Activated CD8-positive, alpha-beta T cell treated with anti-CD3 and anti-CD28 coated beads, Interleukin-2, amount 10 ng/mL, durations not matched to agents 7 days and 5 days (primary cell): ENCODE measurements at regions of chr4 and their contacts with region 1.

Region 1: GRCh38 chr4:153750197-153750817 is 9.5 kb downstream of the RNF175 start:
- DNase-seq: peak; percentile 78
- ATAC-seq: peak; percentile 92
- H3K4me3 Mint-ChIP-seq: no peak overlapping the region
- H3K27ac Mint-ChIP-seq: no peak overlapping the region
- H3K4me1 Mint-ChIP-seq: no peaks in the 10 kb centered on the region
- H3K27me3 Mint-ChIP-seq: peaks cover 17% of the 10 kb centered on the region

Region 2: DNA sequence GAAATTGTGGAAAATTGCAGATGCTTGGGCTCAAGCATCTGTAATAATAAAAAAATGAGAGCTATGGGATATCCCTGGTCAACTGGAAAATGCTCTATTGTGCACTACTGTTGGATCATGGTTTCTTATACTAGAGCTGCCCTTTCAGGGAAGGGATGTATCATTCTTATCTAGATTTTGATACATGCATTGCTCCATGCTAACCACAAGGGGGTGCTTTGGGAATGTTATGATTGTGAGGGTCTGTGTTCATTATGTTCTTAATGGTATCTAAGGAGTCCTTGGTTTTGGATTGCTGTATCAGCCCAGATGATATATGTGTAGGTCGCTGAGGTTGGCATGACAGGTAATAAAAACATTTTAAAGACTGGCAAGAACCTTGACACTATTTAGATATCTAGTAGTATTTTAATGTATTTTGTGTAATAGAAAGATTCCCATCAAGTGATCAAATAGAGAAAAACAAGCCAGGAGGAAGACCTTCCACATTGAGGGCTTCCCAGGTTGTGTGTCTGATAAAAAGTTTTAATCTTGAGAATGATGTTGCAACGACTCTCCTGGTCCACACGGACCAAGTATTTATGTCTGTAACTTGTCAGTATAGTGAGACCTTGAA is 115.5 kb before region 1 on chr4:
- CTCF ChIA-PET with region 1: interaction called, 33 read pairs
- POLR2A ChIA-PET with region 1: no interaction called
- DNase-seq: no peak
- ATAC-seq: no peak
- H3K4me3 Mint-ChIP-seq: no peak overlapping the region
- H3K27ac Mint-ChIP-seq: no peak overlapping the region
- H3K4me1 Mint-ChIP-seq: no peaks in the 10 kb centered on the region
- H3K27me3 Mint-ChIP-seq: no peaks in the 10 kb centered on the region

Region 3: GRCh38 chr4:153643406-153644383 is 106.6 kb before region 1 on chr4:
- CTCF ChIA-PET with region 1: interaction called, 57 read pairs
- POLR2A ChIA-PET with region 1: no interaction called
- DNase-seq: no peak
- ATAC-seq: peak; percentile 89
- H3K4me3 Mint-ChIP-seq: no peak overlapping the region
- H3K27ac Mint-ChIP-seq: peak overlapping the region; percentile 50
- H3K4me1 Mint-ChIP-seq: peaks cover 23% of the 10 kb centered on the region
- H3K27me3 Mint-ChIP-seq: no peaks in the 10 kb centered on the region

Region 4: DNA sequence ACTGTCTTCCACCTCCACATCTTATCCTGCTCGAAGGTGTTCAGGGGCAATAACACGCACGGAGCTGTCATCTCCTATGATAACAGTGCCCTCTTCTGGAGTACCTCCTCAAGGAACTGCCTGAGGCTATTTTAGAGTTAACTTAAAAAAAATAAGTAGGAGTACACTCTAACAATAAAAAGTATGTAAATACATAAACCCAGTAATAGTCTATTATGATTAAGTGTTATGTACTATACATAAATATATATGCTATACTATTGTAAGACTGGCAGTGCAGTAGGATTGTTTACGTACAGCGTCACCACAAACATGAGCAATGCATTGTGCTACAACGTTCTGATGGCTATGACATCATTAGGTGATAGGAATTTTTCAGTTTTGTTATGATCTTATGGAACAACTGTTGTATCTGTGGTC is 100.7 kb before region 1 on chr4:
- CTCF ChIA-PET with region 1: interaction called, 57 read pairs
- POLR2A ChIA-PET with region 1: no interaction called
- DNase-seq: no peak
- ATAC-seq: no peak
- H3K4me3 Mint-ChIP-seq: no peak overlapping the region
- H3K27ac Mint-ChIP-seq: no peak overlapping the region
- H3K4me1 Mint-ChIP-seq: peaks cover 29% of the 10 kb centered on the region
- H3K27me3 Mint-ChIP-seq: peaks cover 1% of the 10 kb centered on the region

Region 5: DNA sequence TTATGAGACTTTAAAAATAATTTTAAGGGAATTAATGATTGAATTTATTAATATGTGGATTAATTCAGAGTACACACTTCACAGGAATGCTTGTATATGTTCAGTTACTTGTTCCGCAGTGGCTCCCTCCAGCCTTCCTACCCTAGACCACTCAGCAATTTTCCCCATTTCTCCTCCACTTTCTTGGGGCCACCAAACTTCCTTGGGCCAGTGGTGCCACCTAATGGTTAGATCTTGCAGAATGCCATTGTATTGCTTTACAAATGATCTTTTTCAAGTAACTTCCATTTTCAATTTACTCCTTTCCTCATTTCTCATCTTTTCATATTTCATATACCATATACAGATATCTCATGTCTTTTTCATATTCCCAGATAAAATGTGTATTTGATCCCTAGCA is 13.1 kb after region 1 on chr4:
- CTCF ChIA-PET with region 1: interaction called, 14 read pairs
- POLR2A ChIA-PET with region 1: no interaction called
- DNase-seq: no peak
- ATAC-seq: no peak
- H3K4me3 Mint-ChIP-seq: no peak overlapping the region
- H3K27ac Mint-ChIP-seq: no peak overlapping the region
- H3K4me1 Mint-ChIP-seq: no peaks in the 10 kb centered on the region
- H3K27me3 Mint-ChIP-seq: peaks cover 35% of the 10 kb centered on the region